ENCODE measurements at regions of chrX and their contacts with region 1.

Region 1: DNA sequence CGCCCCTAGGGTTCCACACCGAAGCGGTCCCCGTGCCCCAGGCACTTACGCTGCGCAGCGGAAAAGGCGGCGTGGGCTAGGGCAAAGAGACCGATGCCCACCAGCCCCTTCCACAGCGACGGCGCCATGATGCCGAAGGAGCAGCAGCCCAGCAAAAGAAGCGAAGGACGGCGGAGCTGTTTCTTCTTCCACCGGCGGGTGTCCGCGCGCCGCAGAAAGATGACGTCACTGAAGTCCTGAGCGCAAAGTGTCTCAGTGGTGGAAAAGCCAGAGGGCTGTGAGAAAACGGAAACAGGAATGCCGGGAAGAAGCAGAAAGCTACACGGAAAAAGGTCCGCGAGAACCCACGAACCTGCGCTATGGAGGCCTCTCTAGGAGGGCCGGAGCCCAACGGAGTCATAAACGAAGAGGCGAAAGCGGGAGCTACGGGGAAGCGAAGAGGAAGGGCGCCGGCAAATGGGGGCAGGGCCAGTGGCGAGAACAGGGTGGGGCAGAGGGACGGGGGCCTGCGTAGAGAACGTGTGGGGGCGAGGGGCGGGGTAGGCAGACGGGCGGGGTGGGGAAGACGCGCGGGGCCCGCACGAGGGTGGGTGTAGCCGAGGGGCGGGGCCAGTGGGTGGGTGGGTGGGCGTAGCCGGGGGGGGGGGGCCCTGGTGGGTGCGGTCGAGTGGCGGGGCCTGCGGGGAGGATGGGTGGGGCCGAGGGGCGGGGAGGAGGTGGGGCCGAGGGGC is at the start of gene MMGT1:
- DNase-seq: peak; percentile 92
- ATAC-seq: peak; percentile 91
- H3K4me3 ChIP-seq: peak within 1 kb of the TSS; percentile 65 to 93 (median 81)
- H3K4me3 Mint-ChIP-seq: peak within 1 kb of the TSS; percentile 99
- H3K27ac ChIP-seq: peak within 1 kb of the TSS; percentile 90 to 92
- H3K27ac Mint-ChIP-seq: peak within 1 kb of the TSS; percentile 98
- H3K4me1 ChIP-seq: peaks cover 9 to 17% of the 10 kb centered on the region in 2 donors
- H3K4me1 Mint-ChIP-seq: peaks cover 21% of the 10 kb centered on the region
- H3K27me3 ChIP-seq: no peaks in the 10 kb centered on the region
- H3K27me3 Mint-ChIP-seq: no peaks in the 10 kb centered on the region
- CTCF ChIP-seq: no peak
- total RNA-seq, gene MMGT1: 24.4 and 25.1 TPM in 2 replicates

Region 2: GRCh38 chrX:135050603-135051002 is 923.1 kb before region 1 on chrX:
- CTCF ChIA-PET with region 1: no interaction called
- POLR2A ChIA-PET with region 1: interaction called, 5 read pairs
- intact Hi-C with region 1: loop called (anchors 5 kb)
- DNase-seq: no peak
- ATAC-seq: no peak
- H3K4me3 ChIP-seq: no peak overlapping the region
- H3K4me3 Mint-ChIP-seq: peak overlapping the region; percentile 93
- H3K27ac ChIP-seq: no peak overlapping the region
- H3K27ac Mint-ChIP-seq: no peak overlapping the region
- H3K4me1 ChIP-seq: peaks cover 4 to 17% of the 10 kb centered on the region in 2 donors
- H3K4me1 Mint-ChIP-seq: peaks cover 18% of the 10 kb centered on the region
- H3K27me3 ChIP-seq: no peaks in the 10 kb centered on the region
- H3K27me3 Mint-ChIP-seq: no peaks in the 10 kb centered on the region
- CTCF ChIP-seq: no peak

Region 3: GRCh38 chrX:135421537-135421931 is 552.2 kb before region 1 on chrX:
- CTCF ChIA-PET with region 1: no interaction called
- POLR2A ChIA-PET with region 1: no interaction called
- intact Hi-C with region 1: loop called (anchors 5 kb)
- DNase-seq: peak; percentile 83
- ATAC-seq: peak; percentile 93
- H3K4me3 ChIP-seq: peak overlapping the region in 4 of 5 experiments; percentile 17 to 51 (median 42)
- H3K4me3 Mint-ChIP-seq: peak overlapping the region; percentile 79
- H3K27ac ChIP-seq: no peak overlapping the region
- H3K27ac Mint-ChIP-seq: no peak overlapping the region
- H3K4me1 ChIP-seq: peaks cover 0 to 8% of the 10 kb centered on the region in 2 donors
- H3K4me1 Mint-ChIP-seq: peaks cover 3% of the 10 kb centered on the region
- H3K27me3 ChIP-seq: no peaks in the 10 kb centered on the region
- H3K27me3 Mint-ChIP-seq: no peaks in the 10 kb centered on the region
- CTCF ChIP-seq: no peak

Region 4: GRCh38 chrX:135521405-135522189 is 452.1 kb before region 1 on chrX:
- CTCF ChIA-PET with region 1: no interaction called
- POLR2A ChIA-PET with region 1: interaction called, 3 read pairs
- intact Hi-C with region 1: loop called (anchors 1 kb)
- DNase-seq: peak; percentile 89
- ATAC-seq: peak; percentile 73
- H3K4me3 ChIP-seq: peak overlapping the region; percentile 62 to 86 (median 81)
- H3K4me3 Mint-ChIP-seq: peak overlapping the region; percentile 99
- H3K27ac ChIP-seq: peak overlapping the region; percentile 81 to 88
- H3K27ac Mint-ChIP-seq: peak overlapping the region; percentile 100
- H3K4me1 ChIP-seq: peaks cover 5 to 14% of the 10 kb centered on the region in 2 donors
- H3K4me1 Mint-ChIP-seq: peaks cover 33% of the 10 kb centered on the region
- H3K27me3 ChIP-seq: no peaks in the 10 kb centered on the region
- H3K27me3 Mint-ChIP-seq: no peaks in the 10 kb centered on the region
- CTCF ChIP-seq: no peak

Region 5: DNA sequence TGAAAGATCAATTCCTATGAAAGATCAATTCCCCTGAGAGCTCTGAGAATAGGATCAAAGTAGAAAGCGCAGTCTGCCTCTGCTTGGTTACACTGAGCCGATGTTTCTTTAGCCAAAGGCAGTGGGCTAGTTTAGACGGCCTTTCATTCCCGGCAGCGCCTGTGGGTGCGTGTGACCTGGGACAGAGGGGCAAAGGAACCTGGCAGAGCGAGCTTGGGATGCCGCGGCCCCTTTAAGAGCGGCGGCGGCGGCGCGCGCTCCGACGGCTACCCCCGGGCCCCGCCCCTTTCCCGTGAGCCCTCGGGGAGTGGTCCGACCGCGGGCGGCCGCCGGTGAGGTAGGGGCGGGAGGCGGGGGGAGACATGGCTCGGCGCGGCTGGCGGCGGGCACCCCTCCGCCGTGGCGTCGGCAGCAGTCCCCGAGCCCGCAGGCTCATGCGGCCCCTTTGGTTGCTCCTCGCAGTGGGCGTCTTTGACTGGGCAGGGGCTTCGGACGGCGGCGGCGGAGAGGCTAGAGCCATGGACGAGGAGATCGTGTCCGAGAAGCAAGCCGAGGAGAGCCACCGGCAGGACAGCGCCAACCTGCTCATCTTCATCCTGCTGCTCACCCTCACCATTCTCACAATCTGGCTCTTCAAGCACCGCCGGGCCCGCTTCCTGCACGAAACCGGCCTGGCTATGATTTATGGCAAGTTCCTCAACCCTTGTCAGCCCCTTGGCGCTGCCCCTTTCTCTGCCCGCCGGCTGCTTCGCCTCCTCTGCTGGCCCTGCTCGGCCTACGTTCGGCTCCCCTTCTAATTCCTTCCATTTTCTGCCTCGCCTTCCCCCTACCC is 11.6 kb after region 1 on chrX and contains the start of gene SLC9A6:
- CTCF ChIA-PET with region 1: no interaction called
- POLR2A ChIA-PET with region 1: no interaction called
- intact Hi-C with region 1: loop called (anchors 1 kb)
- DNase-seq: peak; percentile 76
- ATAC-seq: peak; percentile 93
- H3K4me3 ChIP-seq: peak within 1 kb of the TSS; percentile 65 to 81 (median 77)
- H3K4me3 Mint-ChIP-seq: peak within 1 kb of the TSS; percentile 91
- H3K27ac ChIP-seq: peak within 1 kb of the TSS; percentile 62 to 77
- H3K27ac Mint-ChIP-seq: peak within 1 kb of the TSS; percentile 91
- H3K4me1 ChIP-seq: peaks cover 23 to 33% of the 10 kb centered on the region in 2 donors
- H3K4me1 Mint-ChIP-seq: peaks cover 43% of the 10 kb centered on the region
- H3K27me3 ChIP-seq: no peaks in the 10 kb centered on the region
- H3K27me3 Mint-ChIP-seq: no peaks in the 10 kb centered on the region
- CTCF ChIP-seq: no peak
- total RNA-seq, gene SLC9A6: 14.5 and 15.2 TPM in 2 replicates

Region 6: GRCh38 chrX:136251041-136251991 is 277.6 kb after region 1 on chrX and contains the start of gene MAP7D3:
- CTCF ChIA-PET with region 1: no interaction called
- POLR2A ChIA-PET with region 1: no interaction called
- intact Hi-C with region 1: loop called (anchors 5 kb)
- DNase-seq: peak; percentile 81
- ATAC-seq: peak; percentile 90
- H3K4me3 ChIP-seq: peak within 1 kb of the TSS; percentile 38 to 75 (median 67)
- H3K4me3 Mint-ChIP-seq: peak within 1 kb of the TSS; percentile 88
- H3K27ac ChIP-seq: peak within 1 kb of the TSS; percentile 47 to 70
- H3K27ac Mint-ChIP-seq: peak within 1 kb of the TSS; percentile 89
- H3K4me1 ChIP-seq: peaks cover 5 to 11% of the 10 kb centered on the region in 2 donors
- H3K4me1 Mint-ChIP-seq: peaks cover 13% of the 10 kb centered on the region
- H3K27me3 ChIP-seq: no peaks in the 10 kb centered on the region
- H3K27me3 Mint-ChIP-seq: no peaks in the 10 kb centered on the region
- CTCF ChIP-seq: no peak
- total RNA-seq, gene MAP7D3: 11.5 and 13.0 TPM in 2 replicates

Region 7: DNA sequence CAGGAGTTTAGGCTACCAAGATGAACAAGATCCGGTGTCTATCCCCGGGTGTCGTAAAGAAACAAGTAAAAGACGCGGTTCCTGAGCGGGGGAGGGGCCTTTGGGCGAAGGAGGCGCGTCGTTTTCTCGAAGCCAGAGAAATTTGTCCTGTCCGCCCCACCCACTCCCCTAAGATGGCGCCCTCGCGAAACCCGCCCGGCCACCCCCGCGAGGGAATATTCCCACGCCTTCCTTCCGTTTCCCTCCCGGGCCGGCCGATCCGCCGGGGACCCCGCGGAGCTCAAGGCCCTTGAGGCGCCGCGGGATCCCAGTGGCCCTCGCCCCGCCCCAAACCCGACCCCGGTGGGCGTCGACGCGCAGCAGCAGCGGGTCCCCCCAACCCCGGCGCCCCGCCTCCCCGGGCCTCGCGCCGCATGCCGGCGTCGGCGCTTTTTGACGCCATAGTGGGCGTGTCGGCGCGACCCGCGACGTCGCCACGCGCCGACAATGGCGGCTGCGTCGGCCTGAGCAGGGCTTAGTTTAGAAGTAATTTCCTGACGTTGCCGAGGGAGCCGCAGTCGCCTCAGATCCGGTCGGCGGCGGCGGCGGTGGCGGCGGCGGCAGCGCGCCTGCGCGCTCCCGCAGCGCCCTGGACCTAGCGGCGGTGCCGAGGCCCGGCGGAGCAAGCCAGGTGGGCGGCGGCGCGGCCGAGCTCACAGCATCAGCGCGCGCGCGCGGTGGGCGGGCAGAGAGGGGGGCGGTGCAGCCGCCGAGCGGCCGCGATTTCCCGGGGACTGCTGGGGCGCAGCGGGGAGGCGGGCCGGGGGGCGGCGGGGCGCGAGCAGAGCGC is 523.3 kb after region 1 on chrX and contains the start of gene HTATSF1:
- CTCF ChIA-PET with region 1: no interaction called
- POLR2A ChIA-PET with region 1: no interaction called
- intact Hi-C with region 1: loop called (anchors 2 kb)
- DNase-seq: peak; percentile 92
- ATAC-seq: peak; percentile 77
- H3K4me3 ChIP-seq: peak within 1 kb of the TSS; percentile 62 to 83 (median 75)
- H3K4me3 Mint-ChIP-seq: peak within 1 kb of the TSS; percentile 93
- H3K27ac ChIP-seq: peak within 1 kb of the TSS; percentile 90 to 91
- H3K27ac Mint-ChIP-seq: peak within 1 kb of the TSS; percentile 99
- H3K4me1 ChIP-seq: peaks cover 6 to 7% of the 10 kb centered on the region in 2 donors
- H3K4me1 Mint-ChIP-seq: peaks cover 20% of the 10 kb centered on the region
- H3K27me3 ChIP-seq: no peaks in the 10 kb centered on the region
- H3K27me3 Mint-ChIP-seq: no peaks in the 10 kb centered on the region
- CTCF ChIP-seq: no peak
- total RNA-seq, gene HTATSF1: 17.9 and 18.7 TPM in 2 replicates

Measured in B cell (primary cell).